Ascending aorta (tissue), 2 donors: ENCODE measurements at regions of chr5 and their contacts with region 1.

Region 1: DNA sequence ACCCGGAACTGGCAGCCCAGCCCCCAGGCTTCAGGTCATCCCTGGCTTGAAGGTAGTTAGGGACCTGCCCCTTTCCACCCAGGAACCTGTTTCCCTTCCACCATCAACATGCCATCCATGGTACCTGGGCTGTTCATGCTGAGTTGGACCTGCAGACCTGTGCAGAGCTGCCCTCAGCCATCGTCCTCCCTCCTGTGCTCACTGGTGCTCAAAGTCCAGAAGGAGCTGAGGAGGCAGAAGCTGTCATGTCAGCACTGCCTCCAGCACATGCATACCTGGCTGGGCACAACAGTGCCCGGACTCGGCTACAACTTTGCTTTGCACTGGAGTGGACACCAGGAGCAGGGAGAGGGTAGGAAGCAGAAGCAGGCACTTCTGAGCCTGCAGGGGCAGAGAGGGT is 36.2 kb downstream of the BTNL8 start:
- DNase-seq: no peak
- H3K4me3 ChIP-seq: no peak overlapping the region
- H3K27ac ChIP-seq: no peak overlapping the region
- H3K4me1 ChIP-seq: no peaks in the 10 kb centered on the region
- H3K27me3 ChIP-seq: no peaks in the 10 kb centered on the region
- CTCF ChIP-seq: no peak

Region 2: DNA sequence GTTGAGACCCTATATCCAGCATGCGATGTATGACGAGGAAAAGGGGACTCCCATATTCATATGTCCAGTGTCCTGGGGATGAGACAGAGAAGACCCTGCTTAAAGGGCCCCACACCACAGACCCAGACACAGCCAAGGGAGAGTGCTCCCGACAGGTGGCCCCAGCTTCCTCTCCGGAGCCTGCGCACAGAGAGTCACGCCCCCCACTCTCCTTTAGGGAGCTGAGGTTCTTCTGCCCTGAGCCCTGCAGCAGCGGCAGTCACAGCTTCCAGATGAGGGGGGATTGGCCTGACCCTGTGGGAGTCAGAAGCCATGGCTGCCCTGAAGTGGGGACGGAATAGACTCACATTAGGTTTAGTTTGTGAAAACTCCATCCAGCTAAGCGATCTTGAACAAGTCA is 70.6 kb after region 1 on chr5:
- intact Hi-C with region 1: loop called (anchors 5 kb)
- DNase-seq: no peak
- H3K4me3 ChIP-seq: no peak overlapping the region
- H3K27ac ChIP-seq: no peak overlapping the region
- H3K4me1 ChIP-seq: no peaks in the 10 kb centered on the region
- H3K27me3 ChIP-seq: no peaks in the 10 kb centered on the region
- CTCF ChIP-seq: no peak